CD4-positive, alpha-beta T cell (primary cell): ENCODE measurements at regions of chr3 and their contacts with region 1.

Region 1: GRCh38 chr3:48716982-48717746 is at the start of gene IP6K2:
- DNase-seq: peak; percentile 97 to 99 (median 98)
- ATAC-seq: peak; percentile 99
- H3K4me3 ChIP-seq: peak within 1 kb of the TSS; percentile 89
- H3K4me3 Mint-ChIP-seq: peak within 1 kb of the TSS; percentile 96
- H3K27ac ChIP-seq: peak within 1 kb of the TSS; percentile 77 to 88
- H3K27ac Mint-ChIP-seq: peak within 1 kb of the TSS; percentile 88
- H3K4me1 ChIP-seq: peaks cover 38% of the 10 kb centered on the region
- H3K4me1 Mint-ChIP-seq: peaks cover 43% of the 10 kb centered on the region
- H3K27me3 ChIP-seq: no peaks in the 10 kb centered on the region
- H3K27me3 Mint-ChIP-seq: no peaks in the 10 kb centered on the region
- CTCF ChIP-seq: no peak
- total RNA-seq, gene IP6K2: 97.2 to 121 TPM

Region 2: GRCh38 chr3:49013755-49014628 is 296.8 kb after region 1 on chr3:
- CTCF ChIA-PET with region 1: no interaction called
- POLR2A ChIA-PET with region 1: no interaction called
- intact Hi-C with region 1: loop called in 1 of 2 experiments (anchors 5 kb)
- DNase-seq: peak in 12 of 14 experiments; percentile 30 to 74 (median 46)
- ATAC-seq: peak; percentile 37
- H3K4me3 ChIP-seq: no peak overlapping the region
- H3K4me3 Mint-ChIP-seq: peak overlapping the region; percentile 15
- H3K27ac ChIP-seq: no peak overlapping the region
- H3K27ac Mint-ChIP-seq: no peak overlapping the region
- H3K4me1 ChIP-seq: peaks cover 18% of the 10 kb centered on the region
- H3K4me1 Mint-ChIP-seq: peaks cover 24% of the 10 kb centered on the region
- H3K27me3 ChIP-seq: no peaks in the 10 kb centered on the region
- H3K27me3 Mint-ChIP-seq: no peaks in the 10 kb centered on the region
- CTCF ChIP-seq: peak; percentile 46

Region 3: DNA sequence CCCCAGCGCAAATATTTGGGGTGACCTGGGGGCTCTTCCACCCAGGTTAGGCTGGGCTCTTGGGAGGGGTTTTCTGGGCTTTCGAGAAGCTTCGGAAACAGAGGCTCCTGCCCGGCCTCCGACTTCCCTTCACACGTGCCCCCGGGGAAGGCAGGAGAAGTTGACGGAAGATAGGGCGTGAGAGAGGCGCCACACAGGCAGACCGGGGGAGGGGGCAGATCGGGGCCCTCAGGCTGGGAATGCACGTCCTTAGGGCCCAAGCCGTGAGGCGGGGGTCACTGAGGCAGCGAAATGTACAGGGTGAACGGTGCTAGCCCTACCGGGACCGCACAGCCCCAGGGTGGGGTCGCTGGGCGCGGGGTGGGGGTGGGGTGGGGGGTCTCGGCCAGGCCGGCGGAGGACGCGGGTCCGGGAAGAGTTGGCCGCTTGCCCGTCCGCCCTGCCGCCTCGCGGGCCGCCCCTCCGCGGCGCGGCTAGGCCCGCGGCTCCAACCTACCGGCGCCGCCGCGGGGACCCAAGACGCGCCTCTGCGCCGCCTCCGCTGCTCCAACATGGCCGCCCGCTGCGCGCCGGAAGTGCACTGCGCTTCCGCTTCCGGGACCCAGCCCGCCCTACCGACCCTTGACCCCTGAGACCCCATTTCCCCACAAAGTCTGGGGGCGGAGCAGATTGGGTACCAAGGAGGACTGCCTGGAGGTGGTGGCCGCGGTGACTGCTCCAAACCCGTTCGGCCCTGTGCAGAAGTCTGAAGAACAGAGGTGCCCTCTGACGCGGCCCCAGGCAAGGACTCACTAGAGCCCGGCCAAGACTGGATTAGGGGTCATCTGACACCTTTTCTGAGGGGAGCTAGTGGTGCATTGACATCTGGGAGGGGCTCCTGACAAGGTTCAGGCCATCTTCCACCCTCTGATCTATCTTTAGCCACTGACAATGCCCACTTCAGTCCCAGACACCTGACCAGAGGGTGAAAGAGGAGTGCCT is 448.9 kb after region 1 on chr3 and contains the start of gene CCDC71:
- CTCF ChIA-PET with region 1: no interaction called
- POLR2A ChIA-PET with region 1: no interaction called
- intact Hi-C with region 1: loop called in 1 of 2 experiments (anchors 2 kb)
- DNase-seq: peak; percentile 55 to 89 (median 70)
- ATAC-seq: peak; percentile 80
- H3K4me3 ChIP-seq: peak within 1 kb of the TSS; percentile 94
- H3K4me3 Mint-ChIP-seq: peak within 1 kb of the TSS; percentile 97
- H3K27ac ChIP-seq: peak within 1 kb of the TSS; percentile 48 to 61
- H3K27ac Mint-ChIP-seq: peak within 1 kb of the TSS; percentile 91
- H3K4me1 ChIP-seq: peaks cover 31% of the 10 kb centered on the region
- H3K4me1 Mint-ChIP-seq: peaks cover 44% of the 10 kb centered on the region
- H3K27me3 ChIP-seq: no peaks in the 10 kb centered on the region
- H3K27me3 Mint-ChIP-seq: no peaks in the 10 kb centered on the region
- CTCF ChIP-seq: no peak
- total RNA-seq, gene CCDC71: 14.7 to 16.0 TPM